BJ (cell line): ENCODE measurements at regions of chr10 and their contacts with region 1.

Region 1: DNA sequence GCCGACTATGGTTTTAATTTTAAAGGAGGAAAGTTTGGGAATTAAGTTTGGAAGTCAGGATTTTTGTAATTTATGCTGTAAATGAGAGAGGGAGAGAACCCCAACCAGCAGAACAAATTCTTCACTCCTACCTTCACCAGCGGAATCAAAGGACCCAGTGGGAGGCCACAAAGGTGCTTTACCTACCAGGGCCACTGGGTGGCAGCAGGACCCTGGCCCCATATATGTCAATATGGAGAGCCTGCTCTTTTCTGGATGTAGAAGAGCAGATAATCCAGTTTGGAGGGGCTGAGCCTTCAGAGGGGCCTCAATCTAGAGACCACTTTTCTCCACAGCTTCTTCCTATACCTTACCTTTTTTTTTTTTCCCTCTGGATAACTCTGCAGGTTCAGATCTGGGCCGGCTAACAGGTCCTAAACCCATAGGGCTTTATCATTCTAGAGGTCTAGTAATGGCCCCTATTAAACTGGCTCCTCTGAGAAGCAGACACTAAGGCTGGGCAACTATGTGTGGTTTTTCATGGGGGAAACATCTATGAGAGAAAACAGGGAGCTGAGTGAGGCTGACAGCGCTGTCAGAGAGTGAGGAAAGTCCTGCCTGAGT is 8.5 kb upstream of the SCD start:
- DNase-seq: no peak
- H3K4me3 ChIP-seq: no peak overlapping the region
- H3K27me3 ChIP-seq: peaks cover 8% of the 10 kb centered on the region
- CTCF ChIP-seq: peak; percentile 93

Region 2: DNA sequence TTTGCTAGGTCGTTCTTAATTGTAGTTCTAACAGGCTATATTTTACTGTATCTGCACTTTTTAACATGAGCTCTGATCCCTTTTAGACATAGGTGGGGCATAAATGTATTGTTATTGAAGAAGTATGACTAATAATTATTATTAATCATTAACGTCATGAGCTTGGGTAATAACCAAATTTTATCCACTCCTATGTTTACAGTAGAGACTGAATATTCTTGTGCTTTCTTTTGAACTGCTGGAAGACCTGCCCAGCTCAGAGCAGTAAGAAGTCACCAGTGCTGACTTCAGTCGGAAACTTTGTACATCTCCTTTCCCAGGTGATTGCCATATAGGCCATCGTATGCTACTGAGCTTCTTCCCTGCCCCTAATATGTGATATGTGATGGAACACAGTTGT is 27.2 kb before region 1 on chr10:
- CTCF ChIA-PET with region 1: no interaction called
- POLR2A ChIA-PET with region 1: no interaction called
- DNase-seq: no peak
- H3K4me3 ChIP-seq: no peak overlapping the region
- H3K27me3 ChIP-seq: peaks cover 9% of the 10 kb centered on the region
- CTCF ChIP-seq: no peak

Region 3: GRCh38 chr10:100413173-100413572 is 74.6 kb after region 1 on chr10:
- CTCF ChIA-PET with region 1: no interaction called
- POLR2A ChIA-PET with region 1: no interaction called
- DNase-seq: no peak
- H3K4me3 ChIP-seq: no peak overlapping the region
- H3K27me3 ChIP-seq: no peaks in the 10 kb centered on the region; the same call in 1 of the 2 replicates
- CTCF ChIP-seq: no peak

Region 4: DNA sequence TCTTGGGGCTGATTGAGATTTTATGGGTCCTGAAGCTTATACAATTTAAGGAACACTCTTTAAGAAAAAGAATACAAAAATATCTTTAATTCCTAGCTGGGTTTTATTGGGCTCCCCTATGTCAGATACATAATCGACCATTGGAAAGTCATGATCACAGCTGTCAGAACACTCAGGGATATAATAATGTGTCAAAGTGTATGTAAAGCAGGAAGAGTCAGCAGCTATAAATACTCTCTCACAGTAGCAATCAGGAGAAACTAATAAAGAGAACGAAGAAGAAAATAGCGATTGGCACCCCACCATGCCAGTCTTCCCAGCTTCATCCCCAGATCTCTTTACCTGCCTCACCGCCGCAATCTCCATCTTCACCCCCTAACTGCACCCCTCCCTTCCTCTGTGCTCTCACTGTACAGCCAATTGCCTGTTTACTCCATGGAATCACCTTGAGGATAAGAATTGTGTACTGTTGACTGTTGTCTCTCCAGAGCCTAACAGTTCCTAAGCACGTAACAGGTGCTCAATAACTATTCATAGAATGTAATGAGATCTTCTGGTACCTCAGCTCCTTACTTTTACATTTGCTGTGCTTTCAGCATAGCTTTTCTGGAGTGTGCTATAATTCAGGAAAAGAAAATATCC is 100.3 kb after region 1 on chr10:
- CTCF ChIA-PET with region 1: interaction called, 235 read pairs
- POLR2A ChIA-PET with region 1: no interaction called
- DNase-seq: no peak
- H3K4me3 ChIP-seq: no peak overlapping the region
- H3K27me3 ChIP-seq: no peaks in the 10 kb centered on the region; the same call in 1 of the 2 replicates
- CTCF ChIP-seq: no peak